Activated CD8-positive, alpha-beta T cell treated with anti-CD3 and anti-CD28 coated beads for 36 hours (primary cell): ENCODE measurements at regions of chr3 and their contacts with region 1.

Region 1: GRCh38 chr3:50550079-50550741 is 17.3 kb downstream of the C3orf18 start:
- DNase-seq: peak; percentile 89
- ATAC-seq: peak; percentile 85
- H3K4me3 Mint-ChIP-seq: no peak overlapping the region
- H3K27ac Mint-ChIP-seq: no peak overlapping the region
- H3K4me1 Mint-ChIP-seq: peaks cover 5% of the 10 kb centered on the region
- H3K27me3 Mint-ChIP-seq: no peaks in the 10 kb centered on the region
- CTCF ChIP-seq: peak; percentile 86

Region 2: DNA sequence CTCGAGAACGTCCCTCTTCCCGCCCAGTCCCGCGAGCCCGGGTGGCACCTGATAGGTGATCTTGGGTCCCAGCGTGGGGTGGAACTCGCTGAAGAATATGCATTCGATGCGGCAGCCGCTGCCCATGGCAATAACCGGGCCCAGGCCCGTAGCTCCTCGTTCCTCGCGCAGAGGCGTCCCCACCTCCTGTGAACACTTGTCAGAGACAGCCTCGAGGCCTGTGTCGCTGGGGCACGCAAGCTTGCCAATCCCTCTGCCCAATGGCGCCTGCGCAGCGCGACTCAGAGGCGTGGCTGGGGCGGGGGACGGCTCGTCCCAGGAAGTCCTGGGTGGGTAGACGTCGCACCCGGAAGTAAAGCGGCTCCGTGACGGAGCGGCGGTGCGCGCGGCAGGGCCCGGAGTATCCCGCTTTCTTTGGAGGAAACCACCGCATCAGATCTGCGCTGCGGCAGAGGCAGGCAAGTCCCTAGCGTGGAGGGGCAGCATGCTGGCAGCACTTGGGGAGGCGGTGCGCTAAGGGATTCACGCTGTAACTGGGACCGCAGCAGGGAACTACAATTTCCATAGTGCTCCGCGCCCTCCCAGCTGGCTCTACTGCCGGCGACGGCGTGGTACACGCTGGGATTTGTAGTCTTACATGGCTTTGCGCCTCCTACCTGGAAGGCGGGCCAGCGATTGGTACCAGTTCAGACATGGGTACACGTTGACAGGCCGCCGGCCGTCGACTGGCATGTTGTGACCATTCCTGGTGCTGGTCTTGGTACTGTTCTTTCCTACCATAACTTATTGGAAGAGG is 199.5 kb before region 1 on chr3 and contains the starts of genes CYB561D2 and NPRL2:
- CTCF ChIA-PET with region 1: interaction called, 15 read pairs
- POLR2A ChIA-PET with region 1: no interaction called
- intact Hi-C with region 1: no loop called
- DNase-seq: peak; percentile 98
- ATAC-seq: peak; percentile 89
- H3K4me3 Mint-ChIP-seq: peak within 1 kb of the TSS; percentile 91
- H3K27ac Mint-ChIP-seq: peak within 1 kb of the TSS; percentile 96
- H3K4me1 Mint-ChIP-seq: peaks cover 56% of the 10 kb centered on the region
- H3K27me3 Mint-ChIP-seq: no peaks in the 10 kb centered on the region
- CTCF ChIP-seq: no peak
- total RNA-seq, gene CYB561D2: 17.1 to 18.2 TPM
- total RNA-seq, gene NPRL2: 41.3 to 44.7 TPM

Region 3: GRCh38 chr3:50509715-50510114 is 40.5 kb before region 1 on chr3:
- CTCF ChIA-PET with region 1: interaction called, 21 read pairs
- POLR2A ChIA-PET with region 1: interaction called, 3 read pairs
- intact Hi-C with region 1: no loop called
- DNase-seq: no peak
- ATAC-seq: no peak
- H3K4me3 Mint-ChIP-seq: no peak overlapping the region
- H3K27ac Mint-ChIP-seq: no peak overlapping the region
- H3K4me1 Mint-ChIP-seq: no peaks in the 10 kb centered on the region
- H3K27me3 Mint-ChIP-seq: no peaks in the 10 kb centered on the region
- CTCF ChIP-seq: no peak

Region 4: GRCh38 chr3:50530001-50530970 is 19.9 kb before region 1 on chr3:
- CTCF ChIA-PET with region 1: no interaction called
- POLR2A ChIA-PET with region 1: no interaction called
- intact Hi-C with region 1: no loop called
- DNase-seq: no peak
- ATAC-seq: no peak
- H3K4me3 Mint-ChIP-seq: no peak overlapping the region
- H3K27ac Mint-ChIP-seq: no peak overlapping the region
- H3K4me1 Mint-ChIP-seq: peaks cover 4% of the 10 kb centered on the region
- H3K27me3 Mint-ChIP-seq: peaks cover 12% of the 10 kb centered on the region
- CTCF ChIP-seq: no peak